Heart right ventricle (tissue), 16 donors: ENCODE measurements at regions of chr20 and their contacts with region 1.

Region 1: GRCh38 chr20:59948828-59949720 is 8.9 kb downstream of the FAM217B start:
- DNase-seq: peak in 1 of 2 donors; percentile 40
- ATAC-seq: peak in 3 of 8 donors; percentile 60 to 65 (median 61)
- H3K4me3 ChIP-seq: no peak overlapping the region
- H3K27ac ChIP-seq: peak overlapping the region in 2 of 10 donors; percentile 29 to 42
- H3K4me1 ChIP-seq: peaks cover 0 to 54% (median 28%) of the 10 kb centered on the region in 9 donors
- H3K27me3 ChIP-seq: no peaks in the 10 kb centered on the region
- CTCF ChIP-seq: peak; percentile 49 to 76 (median 70)

Region 2: DNA sequence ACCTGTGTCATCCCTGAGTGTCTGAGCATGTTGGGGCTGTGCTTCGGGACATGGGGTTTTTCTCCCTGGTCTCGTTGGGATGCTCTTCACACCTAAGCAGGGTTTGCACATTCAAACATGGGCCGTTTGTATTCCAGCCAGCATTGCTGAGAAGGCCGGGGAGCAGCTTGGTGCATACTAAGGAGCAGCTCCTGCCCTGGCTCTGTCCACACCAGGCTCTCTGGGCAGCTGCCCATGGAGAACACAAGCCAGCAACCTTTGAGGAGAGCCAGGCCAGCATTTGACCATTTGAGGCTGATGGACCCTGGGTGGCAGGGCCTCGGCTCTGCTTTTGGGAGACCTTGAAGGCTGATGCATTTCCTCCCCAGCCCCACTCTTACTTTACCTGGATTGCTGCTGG is 252.6 kb before region 1 on chr20:
- intact Hi-C with region 1: no loop called
- DNase-seq: no peak
- ATAC-seq: no peak
- H3K4me3 ChIP-seq: no peak overlapping the region
- H3K27ac ChIP-seq: no peak overlapping the region
- H3K4me1 ChIP-seq: peaks cover 0 to 12% (median 0%) of the 10 kb centered on the region in 9 donors
- H3K27me3 ChIP-seq: peaks cover 0 to 30% (median 0%) of the 10 kb centered on the region in 7 donors
- CTCF ChIP-seq: no peak

Region 3: GRCh38 chr20:59891581-59891980 is 57.5 kb before region 1 on chr20:
- intact Hi-C with region 1: no loop called
- DNase-seq: no peak
- ATAC-seq: no peak
- H3K4me3 ChIP-seq: no peak overlapping the region
- H3K27ac ChIP-seq: no peak overlapping the region
- H3K4me1 ChIP-seq: no peaks in the 10 kb centered on the region
- H3K27me3 ChIP-seq: no peaks in the 10 kb centered on the region
- CTCF ChIP-seq: no peak

Region 4: DNA sequence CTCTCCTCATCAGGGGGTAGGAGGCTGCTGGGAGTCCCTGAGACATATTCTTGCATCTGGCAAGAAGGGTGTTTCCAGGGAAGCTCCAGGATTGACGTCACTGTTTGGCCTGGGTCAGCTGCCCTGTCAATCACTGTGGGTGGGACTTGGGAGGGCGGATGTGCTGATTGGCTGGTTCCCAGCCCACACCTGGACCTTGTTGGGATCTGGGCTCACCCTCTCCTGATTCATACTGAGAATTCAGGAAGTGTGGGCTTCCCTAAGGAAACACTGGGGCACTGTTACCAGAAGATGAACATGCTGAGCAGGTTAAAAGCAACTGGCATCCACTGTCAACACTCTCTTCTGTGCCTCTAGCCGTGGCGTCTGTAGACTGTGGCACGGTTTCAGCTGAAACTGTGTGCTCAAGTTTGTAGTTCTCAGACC is 45.6 kb after region 1 on chr20:
- intact Hi-C with region 1: no loop called
- DNase-seq: peak; percentile 17 to 32
- ATAC-seq: peak; percentile 52 to 85 (median 68)
- H3K4me3 ChIP-seq: peak overlapping the region in 4 of 10 donors; percentile 10 to 30 (median 16)
- H3K27ac ChIP-seq: no peak overlapping the region
- H3K4me1 ChIP-seq: peaks cover 3 to 25% (median 14%) of the 10 kb centered on the region in 9 donors
- H3K27me3 ChIP-seq: no peaks in the 10 kb centered on the region
- CTCF ChIP-seq: no peak

Region 5: GRCh38 chr20:60050158-60050947 is 101.3 kb after region 1 on chr20:
- intact Hi-C with region 1: loop called in 3 of 10 experiments (anchors 5 to 10 kb)
- DNase-seq: no peak
- ATAC-seq: no peak
- H3K4me3 ChIP-seq: no peak overlapping the region
- H3K27ac ChIP-seq: no peak overlapping the region
- H3K4me1 ChIP-seq: peaks cover 0 to 63% (median 0%) of the 10 kb centered on the region in 9 donors
- H3K27me3 ChIP-seq: peaks cover 0 to 22% (median 7%) of the 10 kb centered on the region in 7 donors
- CTCF ChIP-seq: peak in 6 of 9 donors; percentile 10 to 30 (median 23)

Region 6: DNA sequence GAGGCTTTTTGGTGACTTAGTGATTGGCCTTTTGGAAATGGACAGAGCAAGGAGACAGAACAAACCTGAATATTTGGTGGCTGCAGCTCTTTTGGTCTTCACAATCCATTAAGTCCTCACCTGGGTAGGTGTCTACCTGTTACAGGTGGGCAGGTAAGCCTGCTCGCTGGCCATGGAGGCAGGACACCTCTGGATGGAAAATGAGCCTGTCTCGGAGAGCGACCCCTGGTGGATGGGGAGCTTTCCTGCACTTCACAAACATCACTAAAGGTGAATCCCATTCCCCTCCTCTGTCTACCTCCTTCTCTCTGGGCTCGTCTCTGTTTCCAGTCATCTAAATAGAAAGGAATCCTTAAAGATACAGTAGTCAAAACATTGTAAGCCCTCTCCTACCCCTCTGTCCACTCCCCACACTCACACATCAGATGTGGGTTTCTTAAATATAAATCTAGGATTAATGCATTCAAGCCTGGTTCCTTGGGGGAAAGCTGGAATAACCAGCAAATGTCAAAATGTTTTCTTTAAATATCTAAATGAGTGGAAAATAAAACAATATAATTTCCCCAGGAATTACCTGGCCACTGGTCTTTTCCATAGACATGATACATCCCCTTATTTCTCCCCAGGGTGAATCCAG is 314.0 kb after region 1 on chr20:
- intact Hi-C with region 1: loop called in 1 of 10 experiments (anchors 5 kb)
- DNase-seq: no peak
- ATAC-seq: no peak
- H3K4me3 ChIP-seq: no peak overlapping the region
- H3K27ac ChIP-seq: no peak overlapping the region
- H3K4me1 ChIP-seq: peaks cover 0 to 4% (median 0%) of the 10 kb centered on the region in 9 donors
- H3K27me3 ChIP-seq: peaks cover 0 to 54% (median 11%) of the 10 kb centered on the region in 7 donors
- CTCF ChIP-seq: peak; percentile 17 to 81 (median 65)

Region 7: DNA sequence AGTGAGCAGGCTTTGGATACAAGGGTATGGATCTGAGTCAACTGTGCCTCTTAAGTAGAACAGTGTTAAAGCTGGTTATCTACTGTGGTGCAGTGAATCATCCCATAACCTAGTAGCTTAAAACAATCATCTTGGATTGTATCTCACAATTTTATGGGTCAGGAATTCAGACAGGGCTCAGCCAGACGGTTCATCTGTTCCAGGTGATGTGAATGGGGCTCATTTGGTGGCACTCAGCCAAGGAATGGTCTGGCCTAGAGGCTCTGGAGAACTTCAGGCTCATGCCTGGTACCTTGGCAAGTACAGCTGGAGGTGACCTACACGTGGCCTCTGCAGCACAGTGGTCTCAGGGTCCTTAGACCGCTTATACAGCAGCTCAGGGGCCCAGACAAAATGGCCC is 1291.7 kb after region 1 on chr20:
- intact Hi-C with region 1: loop called in 1 of 10 experiments (anchors 5 kb)
- DNase-seq: no peak
- ATAC-seq: no peak
- H3K4me3 ChIP-seq: no peak overlapping the region
- H3K27ac ChIP-seq: no peak overlapping the region
- H3K4me1 ChIP-seq: no peaks in the 10 kb centered on the region
- H3K27me3 ChIP-seq: peaks cover 0 to 41% (median 15%) of the 10 kb centered on the region in 7 donors
- CTCF ChIP-seq: no peak